ENCODE measurements at regions of chr5 and their contacts with region 1.

Region 1: GRCh38 chr5:77076961-77077823 is 9.9 kb downstream of the ZBED3 start:
- DNase-seq: peak; percentile 83
- H3K4me3 ChIP-seq: peak overlapping the region; percentile 25 to 73 (median 60)
- H3K27ac ChIP-seq: peak overlapping the region; percentile 74 to 81 (median 78)
- H3K4me1 ChIP-seq: peaks cover 0 to 11% (median 10%) of the 10 kb centered on the region in 4 donors
- H3K27me3 ChIP-seq: no peaks in the 10 kb centered on the region
- CTCF ChIP-seq: peak in 2 of 4 experiments; percentile 11 to 84
- EP300 ChIP-seq: no peak
- POLR2A ChIP-seq: no peak

Region 2: GRCh38 chr5:76999423-76999822 is 77.8 kb before region 1 on chr5:
- intact Hi-C with region 1: no loop called
- DNase-seq: no peak
- H3K4me3 ChIP-seq: no peak overlapping the region
- H3K27ac ChIP-seq: no peak overlapping the region
- H3K4me1 ChIP-seq: no peaks in the 10 kb centered on the region
- H3K27me3 ChIP-seq: peaks cover 0 to 4% (median 0%) of the 10 kb centered on the region in 3 donors
- CTCF ChIP-seq: no peak
- EP300 ChIP-seq: no peak
- POLR2A ChIP-seq: no peak

Region 3: GRCh38 chr5:77030097-77031071 is 46.8 kb before region 1 on chr5 and contains the start of gene AGGF1:
- intact Hi-C with region 1: loop called (anchors 1 kb)
- DNase-seq: peak; percentile 96
- H3K4me3 ChIP-seq: peak within 1 kb of the TSS; percentile 77 to 94 (median 88)
- H3K27ac ChIP-seq: peak within 1 kb of the TSS; percentile 85 to 95 (median 90)
- H3K4me1 ChIP-seq: peaks cover 0 to 18% (median 14%) of the 10 kb centered on the region in 4 donors
- H3K27me3 ChIP-seq: no peaks in the 10 kb centered on the region
- CTCF ChIP-seq: no peak
- EP300 ChIP-seq: no peak
- POLR2A ChIP-seq: peak; percentile 53 to 69
- total RNA-seq, gene AGGF1: 16.3 to 21.8 (median 17.7) TPM